Ovary (tissue), 10 donors: ENCODE measurements at regions of chr3 and their contacts with region 1.

Region 1: GRCh38 chr3:150546226-150547044 is at the starts of genes EIF2A and SERP1:
- DNase-seq: peak; percentile 98 to 99 (median 99)
- H3K4me3 ChIP-seq: peak within 1 kb of the TSS; percentile 76
- H3K27ac ChIP-seq: peak within 1 kb of the TSS; percentile 98
- H3K4me1 ChIP-seq: peaks cover 2% of the 10 kb centered on the region
- H3K27me3 ChIP-seq: no peaks in the 10 kb centered on the region
- CTCF ChIP-seq: no peak
- EP300 ChIP-seq: peak; percentile 73
- POLR2A ChIP-seq: peak; percentile 98
- total RNA-seq, gene EIF2A: 91.8 to 206 (median 114) TPM
- total RNA-seq, gene SERP1: 93.5 to 638 (median 117) TPM

Region 2: DNA sequence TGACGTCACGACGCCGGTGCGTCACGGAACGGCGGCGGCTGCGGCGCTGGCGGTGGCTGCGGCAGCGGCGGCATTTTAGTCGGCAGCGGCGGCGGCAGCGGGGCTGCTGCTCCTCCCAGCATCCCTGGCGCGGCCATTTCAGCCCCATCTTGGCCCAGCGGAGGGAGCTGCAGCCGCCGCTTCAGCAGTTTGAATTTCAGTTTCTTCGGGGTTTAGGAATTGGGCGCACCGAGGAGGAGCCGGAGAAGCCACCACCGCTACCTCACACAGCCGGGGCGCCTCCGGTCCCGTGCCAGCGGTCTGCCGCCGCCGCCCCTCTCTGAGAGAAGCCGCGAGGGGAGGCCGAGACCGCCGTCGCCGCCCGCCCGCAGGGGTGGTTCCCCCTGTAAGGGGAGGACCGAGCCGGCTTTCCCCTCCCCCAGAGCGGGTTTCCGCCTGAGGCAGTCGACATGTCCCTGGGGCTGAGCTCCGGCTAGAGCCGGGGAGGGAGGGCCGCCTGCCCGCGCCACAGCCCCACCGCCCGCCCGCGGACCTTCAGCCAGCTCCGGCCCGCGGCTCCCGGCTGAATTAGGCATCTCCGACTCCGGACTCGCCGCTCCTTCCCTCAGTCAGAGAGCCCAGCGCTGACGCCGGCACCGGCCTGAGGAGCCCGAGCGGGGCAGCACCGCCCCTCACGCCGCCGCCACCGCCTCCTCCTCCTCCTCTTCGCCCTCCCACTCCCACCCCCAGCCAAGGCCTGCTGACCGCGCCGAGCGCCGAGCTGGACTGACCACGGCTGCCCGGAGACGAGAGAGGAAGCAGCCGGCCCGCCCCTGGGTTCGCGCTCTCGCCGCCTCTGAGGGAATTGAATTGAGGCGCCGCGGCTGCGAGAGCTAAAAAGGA is 138.0 kb before region 1 on chr3 and contains the start of gene TSC22D2:
- intact Hi-C with region 1: loop called in 1 of 4 experiments (anchors 2 kb)
- DNase-seq: peak; percentile 97 to 99 (median 98)
- H3K4me3 ChIP-seq: peak within 1 kb of the TSS; percentile 78
- H3K27ac ChIP-seq: peak within 1 kb of the TSS; percentile 100
- H3K4me1 ChIP-seq: no peaks in the 10 kb centered on the region
- H3K27me3 ChIP-seq: no peaks in the 10 kb centered on the region
- CTCF ChIP-seq: peak in 1 of 3 donors; percentile 47
- EP300 ChIP-seq: peak; percentile 64
- POLR2A ChIP-seq: peak; percentile 98
- total RNA-seq, gene TSC22D2: 13.8 to 33.4 (median 28.0) TPM

Region 3: GRCh38 chr3:150603153-150603979 is 56.9 kb after region 1 on chr3 and contains the start of gene SELENOT:
- intact Hi-C with region 1: loop called in 1 of 4 experiments (anchors 10 kb)
- DNase-seq: peak; percentile 94 to 98 (median 96)
- H3K4me3 ChIP-seq: peak within 1 kb of the TSS; percentile 53
- H3K27ac ChIP-seq: peak within 1 kb of the TSS; percentile 93 to 94
- H3K4me1 ChIP-seq: peaks cover 10% of the 10 kb centered on the region
- H3K27me3 ChIP-seq: no peaks in the 10 kb centered on the region
- CTCF ChIP-seq: peak in 2 of 3 donors; percentile 50 to 64
- EP300 ChIP-seq: no peak
- POLR2A ChIP-seq: peak; percentile 91
- total RNA-seq, gene SELENOT: 56.0 to 78.5 (median 69.1) TPM